Uterus (tissue), 4 donors: ENCODE measurements at regions of chr7 and their contacts with region 1.

Region 1: DNA sequence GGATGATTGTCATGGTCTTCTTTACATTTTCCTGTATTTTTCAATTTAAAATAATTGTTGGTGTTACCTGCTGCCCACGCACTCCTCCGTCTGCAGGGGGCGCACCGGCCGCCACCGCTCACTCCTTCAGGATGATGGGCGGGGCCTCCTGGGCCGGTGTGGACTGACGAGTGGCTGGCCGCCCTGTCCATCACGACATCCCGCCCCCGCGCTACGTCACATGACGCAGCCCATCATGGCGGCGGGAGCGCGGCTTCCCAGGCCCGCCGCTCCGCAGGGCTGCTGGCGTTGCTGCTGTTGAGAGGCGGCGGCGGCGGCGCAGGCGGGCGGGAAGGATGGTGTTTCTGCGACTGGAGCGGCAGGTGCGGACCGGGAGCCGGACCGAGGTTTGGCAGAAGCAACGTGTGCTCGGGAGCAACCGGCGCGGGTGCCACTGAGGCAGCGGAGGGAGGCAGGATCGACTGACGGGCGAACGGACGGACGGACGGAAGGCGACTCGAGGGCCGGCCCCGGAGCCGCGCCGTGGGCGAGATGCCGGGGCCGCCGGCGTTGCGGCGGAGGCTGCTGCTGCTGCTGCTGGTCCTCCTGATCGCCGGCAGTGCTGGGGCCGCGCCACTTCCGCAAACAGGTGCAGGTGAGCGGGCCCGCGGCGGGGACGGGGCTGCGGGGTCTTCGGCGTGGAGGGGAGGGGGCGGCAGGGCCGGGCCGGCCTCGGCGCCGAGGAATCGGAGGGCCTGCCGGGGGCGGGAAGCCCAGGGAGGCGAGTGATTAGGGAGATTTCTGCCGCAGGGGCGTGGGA is at the start of gene LMTK2:
- DNase-seq: peak; percentile 94 to 97
- H3K4me3 ChIP-seq: peak within 1 kb of the TSS; percentile 51 to 81
- H3K27ac ChIP-seq: peak within 1 kb of the TSS; percentile 73 to 75
- H3K4me1 ChIP-seq: no peaks in the 10 kb centered on the region
- H3K27me3 ChIP-seq: no peaks in the 10 kb centered on the region
- CTCF ChIP-seq: peak; percentile 95 to 99 (median 96)
- POLR2A ChIP-seq: peak; percentile 91 to 96
- total RNA-seq, gene LMTK2: 5.9 to 23.3 (median 14.8) TPM

Region 2: GRCh38 chr7:98168181-98168905 is 61.5 kb after region 1 on chr7:
- intact Hi-C with region 1: loop called (anchors 5 kb)
- DNase-seq: peak; percentile 39 to 66
- H3K4me3 ChIP-seq: no peak overlapping the region
- H3K27ac ChIP-seq: no peak overlapping the region
- H3K4me1 ChIP-seq: no peaks in the 10 kb centered on the region
- H3K27me3 ChIP-seq: no peaks in the 10 kb centered on the region
- CTCF ChIP-seq: peak; percentile 73 to 84 (median 80)
- POLR2A ChIP-seq: no peak

Region 3: GRCh38 chr7:98276195-98276761 is 169.4 kb after region 1 on chr7:
- intact Hi-C with region 1: no loop called
- DNase-seq: no peak
- H3K4me3 ChIP-seq: no peak overlapping the region
- H3K27ac ChIP-seq: no peak overlapping the region
- H3K4me1 ChIP-seq: no peaks in the 10 kb centered on the region
- H3K27me3 ChIP-seq: no peaks in the 10 kb centered on the region
- CTCF ChIP-seq: no peak
- POLR2A ChIP-seq: no peak